Common myeloid progenitor, CD34-positive (primary cell): ENCODE measurements at regions of chr3 and their contacts with region 1.

Region 1: GRCh38 chr3:155352900-155353490 is 59.5 kb upstream of the STRIT1 start:
- DNase-seq: peak; percentile 59 to 74 (median 65)
- H3K4me3 ChIP-seq: no peak overlapping the region
- H3K27ac ChIP-seq: no peak overlapping the region
- H3K4me1 ChIP-seq: peaks cover 0 to 5% (median 1%) of the 10 kb centered on the region in 4 experiments
- H3K27me3 ChIP-seq: no peaks in the 10 kb centered on the region

Region 2: DNA sequence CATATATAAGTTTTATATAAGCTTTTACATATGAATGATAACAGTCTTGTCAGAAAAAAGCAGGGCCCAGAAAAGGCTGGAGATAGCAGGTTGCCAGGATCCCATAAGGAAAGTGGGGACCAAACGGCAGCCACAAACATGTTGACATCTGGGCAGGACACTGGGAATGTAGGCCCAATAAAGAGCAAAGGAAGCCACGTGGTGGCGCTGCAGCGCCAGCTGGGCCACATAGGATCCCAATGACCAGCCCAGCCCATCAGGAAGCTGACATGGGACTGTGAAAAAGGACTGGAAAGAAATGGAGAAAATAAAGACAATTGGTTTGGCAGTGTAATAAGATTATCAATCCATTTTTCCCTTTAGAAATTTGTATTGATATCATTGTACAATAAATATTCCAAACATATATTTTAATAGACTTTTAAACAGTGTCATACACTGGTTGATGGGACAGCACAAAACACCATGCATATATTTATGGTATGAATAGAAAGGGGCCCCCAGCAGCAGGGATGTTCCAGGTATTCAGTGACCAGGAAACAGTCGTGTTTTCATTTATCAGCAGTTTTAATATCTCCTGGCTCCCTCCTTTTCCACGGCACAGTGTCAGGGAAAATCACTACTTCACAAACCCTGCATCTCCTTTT is 29.5 kb after region 1 on chr3:
- CTCF ChIA-PET with region 1: interaction called, 11 read pairs
- POLR2A ChIA-PET with region 1: no interaction called
- DNase-seq: peak; percentile 12 to 29 (median 19)
- H3K4me3 ChIP-seq: no peak overlapping the region
- H3K27ac ChIP-seq: no peak overlapping the region
- H3K4me1 ChIP-seq: peaks cover 0 to 5% (median 1%) of the 10 kb centered on the region in 4 experiments
- H3K27me3 ChIP-seq: no peaks in the 10 kb centered on the region